Activated naive CD4-positive, alpha-beta T cell treated with anti-CD3 and anti-CD28 coated beads, Interleukin-2, amount 10 ng/mL, durations not matched to agents 7 days and 5 days (primary cell): ENCODE measurements at regions of chr20 and their contacts with region 1.

Region 1: DNA sequence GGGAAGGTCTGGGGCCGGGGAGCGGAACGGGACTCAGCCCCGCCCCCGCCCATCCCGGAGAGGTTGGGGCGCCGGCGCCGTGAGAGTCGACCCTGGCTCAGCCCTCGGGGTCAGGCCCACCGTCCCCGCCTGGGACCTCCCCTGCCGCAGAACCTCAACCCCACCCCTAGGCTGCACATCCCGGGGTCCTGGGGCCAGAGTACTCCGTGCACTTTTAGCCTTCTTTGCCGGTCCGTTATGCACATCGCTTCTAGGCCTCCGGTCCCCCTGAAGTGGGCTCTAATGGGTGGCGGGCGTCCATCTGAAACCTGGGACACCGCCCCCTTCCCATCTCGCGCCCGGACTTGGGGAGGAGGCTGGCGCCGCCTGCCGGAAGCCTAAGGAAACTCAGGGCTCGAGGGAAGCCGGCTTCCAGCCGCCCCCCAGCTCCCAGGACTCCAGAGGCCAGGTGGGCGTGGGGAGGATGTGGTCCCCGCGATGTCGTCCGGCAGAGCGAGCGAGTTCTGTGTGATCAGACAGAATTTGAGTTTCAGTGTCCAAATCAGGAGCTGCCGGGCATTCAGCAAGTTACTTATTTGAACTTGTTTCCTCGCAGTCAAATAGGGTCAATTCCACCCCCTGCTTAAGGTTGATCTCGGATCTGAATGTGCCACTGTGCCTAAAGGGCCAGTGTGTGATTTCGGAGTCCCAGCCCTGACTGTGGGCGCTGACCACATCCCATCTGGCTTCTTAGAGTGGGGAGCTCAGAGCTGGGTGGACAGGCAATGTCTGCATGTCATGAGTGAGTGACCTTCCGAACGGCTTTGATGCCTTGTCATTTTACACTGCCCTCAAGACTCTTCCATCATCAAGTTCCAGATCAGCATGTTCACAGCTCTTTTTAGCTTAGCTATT is 47.6 kb downstream of the CPXM1 start:
- DNase-seq: peak; percentile 60
- H3K4me3 Mint-ChIP-seq: peak overlapping the region; percentile 69
- H3K27ac Mint-ChIP-seq: no peak overlapping the region
- H3K4me1 Mint-ChIP-seq: peaks cover 27% of the 10 kb centered on the region
- H3K27me3 Mint-ChIP-seq: peaks cover 95% of the 10 kb centered on the region

Region 2: DNA sequence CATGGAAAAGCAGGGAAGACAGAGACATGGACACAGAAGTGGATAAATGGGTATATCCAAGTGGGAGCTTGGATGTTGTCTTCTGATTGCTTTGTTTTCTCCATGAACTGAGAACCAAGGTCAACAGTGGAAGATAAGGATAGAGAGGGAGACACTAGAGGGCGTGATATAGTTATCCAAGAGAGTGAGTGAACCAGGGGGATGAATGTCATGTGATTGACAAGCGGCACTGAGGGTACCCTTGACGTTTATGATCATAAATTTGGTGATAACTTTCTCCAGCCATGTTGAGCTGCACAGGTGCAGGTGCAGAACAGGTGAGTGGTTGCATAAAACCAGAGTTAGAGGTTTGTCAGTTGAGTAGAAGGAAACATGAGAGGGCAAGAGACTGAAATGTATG is 39.5 kb before region 1 on chr20:
- CTCF ChIA-PET with region 1: interaction called, 20 read pairs
- DNase-seq: no peak
- H3K4me3 Mint-ChIP-seq: no peak overlapping the region
- H3K27ac Mint-ChIP-seq: no peak overlapping the region
- H3K4me1 Mint-ChIP-seq: no peaks in the 10 kb centered on the region
- H3K27me3 Mint-ChIP-seq: peaks cover 11% of the 10 kb centered on the region

Region 3: DNA sequence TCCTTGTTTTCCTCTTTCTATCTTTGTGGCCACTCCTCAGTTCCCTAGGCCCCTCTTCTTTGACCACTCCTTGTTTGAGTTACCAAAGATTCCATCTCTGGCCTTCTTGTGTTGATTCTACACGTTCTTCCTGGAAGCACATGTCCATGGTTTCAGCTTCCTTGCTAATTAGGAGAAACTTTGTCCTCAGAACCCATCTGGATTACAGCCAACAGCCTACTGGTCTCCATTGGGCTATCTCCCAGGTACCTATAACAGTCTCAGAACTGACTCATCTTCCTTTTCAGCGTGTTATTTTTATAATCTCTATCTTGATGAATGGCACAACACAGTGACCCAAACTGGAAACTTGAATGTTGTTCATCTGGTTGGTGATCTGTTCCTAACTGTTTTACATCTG is 137.9 kb after region 1 on chr20:
- CTCF ChIA-PET with region 1: no interaction called
- DNase-seq: no peak
- H3K4me3 Mint-ChIP-seq: no peak overlapping the region
- H3K27ac Mint-ChIP-seq: no peak overlapping the region
- H3K4me1 Mint-ChIP-seq: peaks cover 20% of the 10 kb centered on the region
- H3K27me3 Mint-ChIP-seq: no peaks in the 10 kb centered on the region

Region 4: DNA sequence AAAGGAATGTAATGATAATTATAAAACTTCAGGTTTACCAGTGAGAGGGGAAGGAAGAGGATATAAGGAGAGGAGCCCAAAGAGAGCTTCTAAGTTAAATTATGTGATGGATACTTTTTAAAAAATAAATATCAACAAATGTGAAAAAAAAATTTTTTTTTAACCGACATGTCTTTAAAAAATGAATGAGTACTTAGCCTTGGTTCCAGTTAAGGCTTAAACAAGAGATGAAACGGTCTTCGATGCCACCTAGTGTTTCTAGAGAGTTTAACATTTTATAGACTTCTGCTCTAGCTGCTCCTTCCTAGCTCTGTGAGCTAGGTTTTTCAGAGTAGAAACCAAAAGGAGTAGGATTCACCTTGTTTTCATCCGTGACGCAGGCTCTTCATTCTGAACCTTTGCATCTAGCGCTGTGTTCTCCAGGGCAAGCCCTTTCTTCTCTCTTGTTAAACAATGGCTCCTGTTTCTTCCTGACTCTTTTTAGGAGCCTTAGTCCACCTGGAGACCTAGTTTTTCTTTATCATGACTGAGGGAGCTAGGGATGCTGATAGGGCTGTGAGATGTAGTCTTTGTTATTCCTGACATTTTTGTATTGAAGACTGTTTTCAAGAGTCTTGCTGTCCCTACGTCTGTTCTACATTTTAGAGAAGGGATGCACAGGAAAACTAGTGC is 248.2 kb after region 1 on chr20:
- CTCF ChIA-PET with region 1: interaction called, 11 read pairs
- DNase-seq: no peak
- H3K4me3 Mint-ChIP-seq: no peak overlapping the region
- H3K27ac Mint-ChIP-seq: peak overlapping the region; percentile 28
- H3K4me1 Mint-ChIP-seq: no peaks in the 10 kb centered on the region
- H3K27me3 Mint-ChIP-seq: no peaks in the 10 kb centered on the region